ENCODE measurements at regions of chr11 and their contacts with region 1.

Region 1: GRCh38 chr11:57644748-57645688 is 4.7 kb downstream of the YPEL4 start:
- DNase-seq: peak in 3 of 4 donors; percentile 80 to 90 (median 82)
- ATAC-seq: peak; percentile 83
- H3K4me3 ChIP-seq: no peak overlapping the region
- H3K27ac ChIP-seq: peak overlapping the region; percentile 33 to 44
- H3K4me1 ChIP-seq: peaks cover 31 to 67% of the 10 kb centered on the region in 2 donors
- H3K27me3 ChIP-seq: peaks cover 22 to 53% of the 10 kb centered on the region in 2 donors
- CTCF ChIP-seq: peak; percentile 84 to 94

Region 2: DNA sequence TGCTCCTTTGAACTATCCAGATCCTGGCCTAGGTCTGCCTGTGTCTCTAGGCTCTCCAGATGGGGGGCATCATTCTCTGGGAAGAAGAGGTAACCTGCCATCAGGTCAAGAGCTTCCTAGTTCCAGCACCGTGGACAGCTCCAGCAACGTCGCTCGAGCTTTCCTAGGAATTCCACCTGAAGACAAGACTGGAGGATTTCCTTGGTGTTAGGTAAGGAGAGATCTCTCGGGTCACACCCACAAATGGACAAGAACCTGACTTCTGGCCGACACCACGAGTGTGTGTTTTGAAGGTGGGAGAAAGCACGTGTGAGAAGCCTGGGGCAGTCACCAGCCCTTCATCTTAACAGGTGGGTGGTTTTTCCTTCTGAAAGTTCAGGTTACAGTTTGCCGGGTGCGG is 265.3 kb before region 1 on chr11:
- intact Hi-C with region 1: no loop called
- DNase-seq: no peak
- ATAC-seq: peak; percentile 34
- H3K4me3 ChIP-seq: no peak overlapping the region
- H3K27ac ChIP-seq: no peak overlapping the region
- H3K4me1 ChIP-seq: no peaks in the 10 kb centered on the region
- H3K27me3 ChIP-seq: peaks cover 0 to 13% of the 10 kb centered on the region in 2 donors
- CTCF ChIP-seq: no peak

Region 3: GRCh38 chr11:57456960-57457642 is 187.9 kb before region 1 on chr11:
- intact Hi-C with region 1: no loop called
- DNase-seq: peak; percentile 85 to 96 (median 90)
- ATAC-seq: peak; percentile 93
- H3K4me3 ChIP-seq: no peak overlapping the region
- H3K27ac ChIP-seq: no peak overlapping the region
- H3K4me1 ChIP-seq: peaks cover 31 to 44% of the 10 kb centered on the region in 2 donors
- H3K27me3 ChIP-seq: peaks cover 11 to 53% of the 10 kb centered on the region in 2 donors
- CTCF ChIP-seq: peak; percentile 97 to 99

Region 4: DNA sequence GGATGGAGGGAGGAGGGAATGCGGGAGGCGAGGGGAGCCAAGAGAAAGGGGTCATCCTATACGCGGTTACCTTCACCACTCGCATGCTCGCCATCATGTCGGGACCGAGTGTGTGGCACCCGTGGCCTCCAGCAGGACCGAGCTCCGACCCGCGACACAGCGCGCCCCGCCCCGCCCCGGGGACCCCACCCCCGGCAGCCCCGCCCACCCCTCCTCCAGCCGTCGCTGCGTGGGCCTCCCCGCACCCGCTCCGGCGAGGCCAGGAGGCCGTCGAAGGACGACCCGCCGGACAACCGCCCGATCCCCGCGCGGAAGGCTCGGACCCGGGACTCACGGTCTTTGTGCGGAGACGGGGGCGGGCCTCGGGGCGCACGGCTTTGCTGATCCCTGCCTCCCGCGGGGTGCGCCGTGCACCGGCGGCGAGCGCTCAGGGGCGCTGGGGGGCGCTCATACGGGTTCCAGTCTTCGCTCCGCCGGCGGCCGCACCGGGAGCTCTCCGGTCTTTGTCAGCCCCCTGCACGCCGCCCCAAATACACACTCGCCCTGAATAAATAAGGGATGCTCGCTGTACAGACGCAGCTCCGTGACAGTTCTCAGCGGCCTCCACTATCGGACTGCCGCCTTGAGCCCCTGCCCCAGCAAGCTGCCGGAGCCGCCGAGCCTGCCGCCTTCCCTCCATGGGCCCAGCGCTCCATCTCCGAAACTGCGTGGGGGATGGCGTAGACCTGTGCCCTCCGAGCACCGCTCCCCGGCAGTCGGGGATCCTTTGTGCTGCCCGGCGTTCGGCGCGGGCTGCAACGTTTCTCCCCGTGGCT is 77.3 kb before region 1 on chr11 and contains the start of gene UBE2L6:
- intact Hi-C with region 1: loop called in 1 of 2 experiments (anchors 5 kb)
- DNase-seq: peak; percentile 59 to 95 (median 88)
- ATAC-seq: peak; percentile 90
- H3K4me3 ChIP-seq: peak within 1 kb of the TSS; percentile 70 to 88
- H3K27ac ChIP-seq: peak within 1 kb of the TSS; percentile 90 to 92
- H3K4me1 ChIP-seq: peaks cover 18 to 53% of the 10 kb centered on the region in 2 donors
- H3K27me3 ChIP-seq: no peaks in the 10 kb centered on the region
- CTCF ChIP-seq: peak; percentile 87 to 95
- polyA plus RNA-seq, gene UBE2L6: 56.1 to 67.0 (median 62.9) TPM

Region 5: DNA sequence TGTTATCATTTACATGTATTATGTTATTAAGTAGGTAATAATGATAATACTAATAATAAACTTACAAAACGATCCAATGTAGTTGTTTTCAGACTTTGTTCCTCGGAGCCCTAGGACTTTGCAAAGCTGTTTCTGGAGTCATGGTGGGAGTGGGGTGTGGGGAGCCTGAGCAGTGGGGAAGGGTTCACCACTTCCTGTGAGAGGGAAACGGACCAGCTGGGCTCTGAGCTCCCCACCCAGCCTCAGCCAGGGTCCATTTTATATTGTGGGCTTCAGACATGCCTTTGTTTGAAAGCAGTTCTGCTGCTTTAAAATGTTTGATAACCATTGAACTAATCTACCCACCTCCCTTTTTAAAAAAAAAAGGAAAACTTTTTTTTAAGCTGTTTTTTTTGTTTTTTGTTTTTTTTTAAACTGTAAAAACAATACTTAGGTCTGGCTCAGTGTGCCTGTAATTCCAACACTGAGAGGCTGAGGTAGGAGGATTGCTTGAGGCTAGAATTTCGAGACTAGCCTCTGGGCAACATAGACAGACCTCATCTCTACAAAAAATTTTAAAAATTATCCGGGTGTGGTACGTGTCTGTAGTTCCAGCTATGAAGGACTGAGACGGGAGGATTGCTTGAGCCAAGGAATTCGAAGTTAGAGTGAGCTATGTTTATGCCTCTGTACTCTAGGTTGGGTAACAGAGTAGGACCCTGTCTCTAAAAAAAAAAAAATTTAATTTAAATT is 40.6 kb before region 1 on chr11:
- intact Hi-C with region 1: no loop called
- DNase-seq: peak in 2 of 4 donors; percentile 64 to 81
- ATAC-seq: no peak
- H3K4me3 ChIP-seq: no peak overlapping the region
- H3K27ac ChIP-seq: peak overlapping the region in 1 of 2 donors; percentile 28
- H3K4me1 ChIP-seq: peaks cover under 1 to 7% of the 10 kb centered on the region in 2 donors
- H3K27me3 ChIP-seq: no peaks in the 10 kb centered on the region
- CTCF ChIP-seq: no peak

Region 6: GRCh38 chr11:57680552-57680874 is 35.5 kb after region 1 on chr11:
- intact Hi-C with region 1: no loop called
- DNase-seq: no peak
- ATAC-seq: no peak
- H3K4me3 ChIP-seq: no peak overlapping the region
- H3K27ac ChIP-seq: no peak overlapping the region
- H3K4me1 ChIP-seq: peaks cover 0 to 15% of the 10 kb centered on the region in 2 donors
- H3K27me3 ChIP-seq: no peaks in the 10 kb centered on the region
- CTCF ChIP-seq: no peak